Stomach (tissue), 19 donors: ENCODE measurements at regions of chr19 and their contacts with region 1.

Region 1: DNA sequence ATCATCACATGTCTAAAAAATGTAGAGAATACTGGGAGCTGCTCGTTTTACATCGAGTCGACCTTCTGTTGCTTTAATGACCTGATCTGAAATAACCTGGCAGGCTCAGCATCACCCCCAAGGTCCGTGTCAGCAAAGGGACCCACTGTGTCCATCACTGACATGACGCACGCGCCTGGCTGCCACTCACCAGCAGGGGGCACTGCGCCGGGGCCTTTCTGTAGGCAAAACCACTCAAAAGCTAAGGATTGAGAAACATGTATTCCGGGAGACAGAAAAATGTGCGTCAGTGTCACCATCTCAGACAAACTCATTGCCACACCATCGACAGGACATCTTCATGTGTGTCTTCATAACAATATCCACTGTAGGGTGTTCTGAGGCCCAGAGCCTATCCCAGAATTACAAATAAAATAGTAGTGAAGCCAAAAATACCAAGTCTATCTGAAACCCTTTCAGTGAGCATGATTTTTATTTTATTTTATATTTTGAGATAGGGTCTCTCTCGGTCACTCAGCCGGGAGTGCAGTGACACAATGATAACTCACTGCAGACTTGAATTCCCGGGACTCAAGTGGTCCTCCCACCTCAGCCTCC is 130.3 kb upstream of the LSM14A start:
- DNase-seq: peak; percentile 72 to 76
- H3K4me3 ChIP-seq: no peak overlapping the region
- H3K27ac ChIP-seq: no peak overlapping the region
- H3K4me1 ChIP-seq: no peaks in the 10 kb centered on the region
- H3K27me3 ChIP-seq: no peaks in the 10 kb centered on the region
- CTCF ChIP-seq: peak in 5 of 7 experiments; percentile 21 to 85 (median 75)
- EP300 ChIP-seq: no peak
- POLR2A ChIP-seq: no peak

Region 2: DNA sequence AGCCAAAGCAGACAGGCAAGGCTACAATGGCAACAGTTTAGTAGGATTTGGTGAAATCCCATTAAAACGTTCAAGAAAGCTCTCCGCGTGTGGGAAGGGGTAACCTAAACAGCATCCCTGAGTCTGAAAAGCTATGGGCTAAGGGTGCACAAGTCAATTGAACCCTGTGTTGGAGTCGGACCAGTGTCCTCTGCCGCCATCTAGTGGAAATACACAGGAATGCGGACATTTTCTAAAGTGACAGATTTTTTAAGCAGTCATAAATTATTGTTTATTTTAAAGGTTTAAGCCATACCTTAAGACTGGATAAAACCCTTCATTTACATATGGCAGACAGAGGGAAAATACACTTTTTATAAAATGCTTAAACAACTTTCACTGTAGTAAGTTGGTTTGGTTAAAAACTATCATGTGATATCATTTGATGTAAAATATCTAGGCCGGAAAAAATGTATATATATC is 103.7 kb after region 1 on chr19:
- intact Hi-C with region 1: loop called (anchors 10 kb)
- DNase-seq: peak; percentile 54 to 85
- H3K4me3 ChIP-seq: no peak overlapping the region
- H3K27ac ChIP-seq: no peak overlapping the region
- H3K4me1 ChIP-seq: peaks cover 0 to 8% (median 0%) of the 10 kb centered on the region in 4 donors
- H3K27me3 ChIP-seq: no peaks in the 10 kb centered on the region
- CTCF ChIP-seq: peak in 5 of 7 experiments; percentile 41 to 87 (median 74)
- EP300 ChIP-seq: no peak
- POLR2A ChIP-seq: no peak